ENCODE measurements at regions of chr2 and their contacts with region 1.

Region 1: GRCh38 chr2:222903234-222904220 is 42.7 kb downstream of the ACSL3 start:
- DNase-seq: no peak
- ATAC-seq: peak; percentile 60 to 85 (median 72)
- H3K4me3 ChIP-seq: no peak overlapping the region
- H3K27ac ChIP-seq: peak overlapping the region; percentile 33
- H3K4me1 ChIP-seq: peaks cover 30% of the 10 kb centered on the region
- H3K27me3 ChIP-seq: no peaks in the 10 kb centered on the region
- CTCF ChIP-seq: peak; percentile 67

Region 2: GRCh38 chr2:222707689-222708525 is 195.6 kb before region 1 on chr2:
- intact Hi-C with region 1: loop called (anchors 1 to 2 kb)
- DNase-seq: peak; percentile 82 to 87
- ATAC-seq: peak; percentile 58 to 85 (median 64)
- H3K4me3 ChIP-seq: peak overlapping the region; percentile 53
- H3K27ac ChIP-seq: peak overlapping the region; percentile 88
- H3K4me1 ChIP-seq: peaks cover 3% of the 10 kb centered on the region
- H3K27me3 ChIP-seq: no peaks in the 10 kb centered on the region
- CTCF ChIP-seq: peak; percentile 97

Region 3: DNA sequence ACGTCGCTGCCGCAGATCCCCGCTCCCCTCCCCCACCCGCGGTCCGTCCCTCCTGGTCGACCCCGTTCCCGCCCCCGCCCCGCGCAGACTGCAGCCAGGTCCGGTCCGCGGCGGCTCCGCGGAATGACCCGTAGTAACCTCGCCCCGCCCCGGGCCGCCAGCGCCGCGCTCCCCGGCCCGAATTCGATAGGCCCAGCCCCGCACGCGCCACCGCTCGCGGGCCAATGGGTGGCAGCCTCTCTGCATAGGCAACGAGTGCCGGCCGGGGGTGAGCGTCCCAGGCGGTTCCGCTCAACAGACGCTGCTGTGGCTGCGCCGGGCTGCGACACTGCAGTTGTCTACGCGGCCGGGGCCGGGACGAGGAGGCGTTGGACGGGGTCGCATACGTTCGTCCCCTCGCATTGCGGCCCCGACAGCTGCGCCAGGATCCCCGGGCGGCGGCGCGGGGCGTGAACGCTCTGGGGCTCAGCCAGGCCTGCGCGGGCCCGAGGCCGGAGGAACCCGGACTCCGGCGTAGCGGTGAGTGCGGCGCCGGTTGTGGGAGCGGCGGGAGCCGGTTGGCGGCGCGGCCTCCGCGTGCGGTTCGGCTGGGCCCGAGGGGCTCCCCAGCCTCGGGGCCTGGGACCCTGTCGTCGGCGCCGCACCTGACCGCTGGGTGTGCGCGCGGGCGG is 42.7 kb before region 1 on chr2 and contains the start of gene ACSL3:
- intact Hi-C with region 1: loop called (anchors 5 kb)
- DNase-seq: peak; percentile 97 to 98
- ATAC-seq: peak; percentile 94 to 98 (median 96)
- H3K4me3 ChIP-seq: peak within 1 kb of the TSS; percentile 99
- H3K27ac ChIP-seq: peak within 1 kb of the TSS; percentile 99
- H3K4me1 ChIP-seq: peaks cover 45% of the 10 kb centered on the region
- H3K27me3 ChIP-seq: no peaks in the 10 kb centered on the region
- CTCF ChIP-seq: peak; percentile 12
- total RNA-seq, gene ACSL3: 25.3 to 136 (median 46.4) TPM

Region 4: DNA sequence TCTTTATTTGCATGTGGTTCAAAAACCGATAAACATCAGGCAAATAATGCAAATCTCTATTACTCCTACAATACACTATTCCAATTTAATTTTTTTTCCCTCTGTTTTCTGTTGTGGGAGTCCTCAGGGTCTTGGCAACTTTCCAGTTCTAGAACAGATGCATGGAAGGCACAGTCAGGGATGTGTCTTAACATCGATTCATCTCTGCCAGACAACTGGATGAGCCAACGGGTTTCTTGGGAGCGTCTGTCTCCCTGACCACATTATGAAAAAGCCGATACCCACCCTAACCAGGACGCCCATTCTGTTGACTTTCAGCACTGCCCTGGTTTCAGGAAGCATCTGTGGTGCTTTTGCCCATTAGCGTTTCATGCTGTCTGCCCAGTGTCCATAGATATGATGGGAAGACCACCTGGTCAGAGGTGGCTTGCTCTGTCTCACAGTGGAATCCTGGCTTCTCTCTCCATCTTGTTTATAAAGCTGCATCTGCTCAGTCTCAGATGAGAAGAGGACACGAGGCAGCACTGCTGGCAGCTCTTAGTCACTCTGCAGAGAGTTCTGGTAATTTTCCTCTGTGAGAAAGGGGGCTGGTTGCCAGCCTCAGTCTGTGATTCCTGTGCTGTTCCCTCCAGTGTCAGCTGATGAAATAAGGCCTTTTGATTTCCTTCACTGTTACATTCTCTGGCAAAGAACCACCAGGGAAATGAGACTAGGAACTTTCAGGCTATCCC is 90.6 kb after region 1 on chr2:
- intact Hi-C with region 1: no loop called
- DNase-seq: peak; percentile 81 to 87
- ATAC-seq: peak; percentile 84 to 98 (median 98)
- H3K4me3 ChIP-seq: no peak overlapping the region
- H3K27ac ChIP-seq: peak overlapping the region; percentile 63
- H3K4me1 ChIP-seq: no peaks in the 10 kb centered on the region
- H3K27me3 ChIP-seq: no peaks in the 10 kb centered on the region
- CTCF ChIP-seq: no peak

Measured in psoas muscle (tissue), 8 donors.